Calu3 (cell line): ENCODE measurements at regions of chr12 and their contacts with region 1.

Region 1: GRCh38 chr12:89019408-89020120 is 332.7 kb downstream of the DUSP6 start:
- DNase-seq: peak; percentile 82
- H3K4me3 Mint-ChIP-seq: no peak overlapping the region
- H3K27ac Mint-ChIP-seq: no peak overlapping the region
- H3K4me1 Mint-ChIP-seq: peaks cover 21% of the 10 kb centered on the region
- H3K27me3 Mint-ChIP-seq: no peaks in the 10 kb centered on the region
- CTCF ChIP-seq: peak; percentile 91

Region 2: GRCh38 chr12:88111074-88111652 is 908.4 kb before region 1 on chr12:
- CTCF ChIA-PET with region 1: no interaction called
- intact Hi-C with region 1: loop called (anchors 2 kb)
- DNase-seq: no peak
- H3K4me3 Mint-ChIP-seq: peak overlapping the region; percentile 31
- H3K27ac Mint-ChIP-seq: peak overlapping the region; percentile 51
- H3K4me1 Mint-ChIP-seq: no peaks in the 10 kb centered on the region
- H3K27me3 Mint-ChIP-seq: no peaks in the 10 kb centered on the region
- CTCF ChIP-seq: no peak

Region 3: GRCh38 chr12:88805692-88806091 is 213.9 kb before region 1 on chr12:
- CTCF ChIA-PET with region 1: no interaction called
- intact Hi-C with region 1: no loop called
- DNase-seq: no peak
- H3K4me3 Mint-ChIP-seq: no peak overlapping the region
- H3K27ac Mint-ChIP-seq: no peak overlapping the region
- H3K4me1 Mint-ChIP-seq: peaks cover 22% of the 10 kb centered on the region
- H3K27me3 Mint-ChIP-seq: no peaks in the 10 kb centered on the region
- CTCF ChIP-seq: no peak

Region 4: DNA sequence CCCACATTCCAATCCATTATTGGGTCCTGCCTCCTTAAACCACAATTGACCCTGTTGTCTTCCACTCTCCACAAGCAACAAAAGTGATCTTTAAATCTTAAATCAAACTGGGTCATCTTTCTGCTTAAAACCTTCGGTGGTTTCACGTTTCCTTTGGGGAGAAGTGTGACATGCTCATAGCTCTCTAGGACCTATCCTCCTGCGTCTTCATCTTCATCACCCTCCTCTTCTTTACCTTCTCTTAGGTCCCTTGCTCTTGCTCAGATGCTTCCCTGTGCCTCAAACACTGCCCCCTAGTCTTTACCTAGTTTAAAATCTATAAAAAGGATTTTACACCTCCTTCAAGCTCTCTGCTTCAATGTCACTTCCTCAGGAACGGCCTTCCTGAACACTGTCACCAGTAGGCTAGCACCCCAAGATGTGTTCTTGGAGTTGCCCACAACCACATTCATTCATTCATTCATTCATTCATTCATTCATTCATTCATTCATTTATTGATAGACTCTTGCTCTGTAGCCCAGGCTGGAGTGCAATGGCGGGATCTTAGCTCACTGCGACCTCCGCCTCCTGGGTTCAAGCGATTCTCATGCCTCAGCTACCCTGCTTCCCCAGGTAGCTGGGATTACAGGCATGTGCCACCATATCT is 458.2 kb after region 1 on chr12:
- CTCF ChIA-PET with region 1: no interaction called
- intact Hi-C with region 1: no loop called
- DNase-seq: no peak
- H3K4me3 Mint-ChIP-seq: no peak overlapping the region
- H3K27ac Mint-ChIP-seq: no peak overlapping the region
- H3K4me1 Mint-ChIP-seq: peaks cover 22% of the 10 kb centered on the region
- H3K27me3 Mint-ChIP-seq: no peaks in the 10 kb centered on the region
- CTCF ChIP-seq: no peak

Region 5: DNA sequence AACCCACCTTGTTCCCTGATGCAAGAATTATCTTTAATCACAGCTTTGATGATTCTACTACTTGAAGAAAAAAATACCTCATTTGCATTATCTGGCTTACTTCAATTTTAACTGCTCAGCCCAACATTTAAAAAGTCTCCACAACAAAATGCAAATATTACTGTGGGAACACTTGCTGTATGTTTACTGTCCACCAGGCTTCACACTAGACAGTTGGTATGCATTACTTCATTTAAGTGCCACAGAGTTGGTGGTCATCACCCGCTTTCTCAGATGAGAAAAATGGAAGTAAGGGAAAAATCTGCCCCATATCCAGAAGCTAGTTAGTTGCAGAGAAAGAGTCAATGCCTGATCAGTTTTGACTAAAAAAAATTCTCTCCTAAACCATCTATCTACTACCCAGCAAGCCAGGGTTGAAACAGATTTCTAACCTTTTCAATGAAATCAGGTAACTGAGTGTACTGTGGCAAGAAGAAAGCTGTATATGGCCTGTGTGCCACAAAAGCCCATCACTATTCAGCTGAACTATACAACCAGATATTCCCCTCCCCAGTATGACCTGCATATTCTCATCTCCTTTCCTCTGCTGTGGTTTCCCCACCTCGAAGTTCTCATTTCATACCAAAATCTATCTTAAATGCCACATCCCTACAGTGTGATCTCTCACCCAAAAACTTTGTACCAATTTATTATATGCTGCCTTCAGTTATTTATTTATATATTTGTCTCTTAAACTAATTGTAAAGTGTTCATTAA is 598.7 kb after region 1 on chr12:
- CTCF ChIA-PET with region 1: no interaction called
- intact Hi-C with region 1: no loop called
- DNase-seq: no peak
- H3K4me3 Mint-ChIP-seq: no peak overlapping the region
- H3K27ac Mint-ChIP-seq: no peak overlapping the region
- H3K4me1 Mint-ChIP-seq: no peaks in the 10 kb centered on the region
- H3K27me3 Mint-ChIP-seq: no peaks in the 10 kb centered on the region
- CTCF ChIP-seq: no peak